ENCODE measurements at regions of chr3 and their contacts with region 1.

Region 1: DNA sequence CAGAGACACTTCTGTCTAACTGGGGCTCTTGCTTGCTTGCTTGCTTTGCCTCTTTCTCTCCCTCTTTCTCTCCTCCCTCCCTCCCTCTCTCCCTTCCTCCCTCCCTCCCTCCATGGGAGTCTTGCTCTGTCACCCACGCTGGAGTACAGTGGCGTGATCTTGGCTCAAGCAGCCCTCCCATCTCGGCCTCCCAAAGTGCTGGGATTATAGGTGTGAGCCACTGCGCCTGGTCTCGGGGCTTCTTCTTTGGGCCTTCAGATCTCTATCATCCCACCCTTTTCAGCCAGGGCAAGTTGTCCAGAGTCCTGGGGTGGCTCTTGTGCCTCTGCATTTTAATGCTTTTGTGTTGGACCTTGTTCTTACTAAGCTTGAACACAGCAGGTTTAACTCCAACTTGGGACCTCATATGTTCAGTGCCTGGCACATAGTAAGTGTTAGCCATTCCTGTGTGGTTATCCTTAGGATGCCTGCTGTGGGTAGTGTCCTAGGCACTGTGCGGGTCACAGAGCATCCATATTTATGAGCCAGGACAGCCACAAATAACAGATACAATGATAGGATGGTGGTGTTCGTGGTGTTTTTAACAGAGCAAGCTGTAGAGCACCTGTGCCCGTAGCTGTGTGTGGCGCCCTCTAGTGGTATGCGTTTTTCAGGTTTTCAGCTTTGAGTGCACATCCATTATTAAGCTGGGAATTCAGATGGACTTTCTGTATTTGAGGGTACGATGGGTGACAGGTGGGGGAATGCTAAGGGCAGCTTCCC is 75.1 kb downstream of the CCK start:
- DNase-seq: peak; percentile 80
- ATAC-seq: peak; percentile 90
- H3K4me3 Mint-ChIP-seq: no peak overlapping the region
- H3K27ac Mint-ChIP-seq: no peak overlapping the region
- H3K4me1 Mint-ChIP-seq: peaks cover 11% of the 10 kb centered on the region
- H3K27me3 Mint-ChIP-seq: no peaks in the 10 kb centered on the region

Region 2: GRCh38 chr3:41893977-41894376 is 296.9 kb before region 1 on chr3:
- CTCF ChIA-PET with region 1: interaction called, 9 read pairs
- POLR2A ChIA-PET with region 1: no interaction called
- intact Hi-C with region 1: loop called (anchors 1 to 2 kb)
- DNase-seq: no peak
- ATAC-seq: no peak
- H3K4me3 Mint-ChIP-seq: no peak overlapping the region
- H3K27ac Mint-ChIP-seq: no peak overlapping the region
- H3K4me1 Mint-ChIP-seq: no peaks in the 10 kb centered on the region
- H3K27me3 Mint-ChIP-seq: no peaks in the 10 kb centered on the region

Region 3: DNA sequence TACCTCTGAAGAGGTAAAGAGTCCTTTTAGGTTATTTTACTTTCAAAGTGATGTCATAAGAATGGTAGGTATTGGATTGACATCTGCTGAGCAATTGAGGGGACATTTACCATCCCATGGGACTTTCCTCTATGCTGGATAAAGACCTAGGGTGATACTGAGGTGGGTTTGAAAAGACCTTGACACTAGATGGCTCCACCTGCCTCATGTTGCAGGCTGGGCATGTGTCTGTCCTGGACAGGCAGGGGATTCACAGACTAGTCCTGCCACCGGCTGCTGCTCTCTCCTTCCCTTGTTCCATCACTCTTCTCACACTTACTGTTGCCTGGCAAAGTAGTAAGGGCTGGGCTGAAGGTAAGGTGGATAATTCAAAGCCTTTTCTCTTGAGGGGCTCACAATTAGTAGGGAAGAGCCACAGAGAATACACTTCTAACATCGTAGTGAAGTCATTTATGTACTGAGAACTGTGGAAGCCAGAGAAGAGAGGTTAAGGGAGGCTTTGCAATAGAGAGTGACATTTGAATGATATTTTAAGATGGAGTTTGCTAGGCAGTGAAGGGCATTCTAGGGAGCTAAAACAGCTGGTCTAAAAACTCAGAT is 72.0 kb before region 1 on chr3:
- CTCF ChIA-PET with region 1: interaction called, 41 read pairs
- POLR2A ChIA-PET with region 1: no interaction called
- intact Hi-C with region 1: loop called (anchors 1 kb)
- DNase-seq: peak; percentile 37
- ATAC-seq: peak; percentile 66
- H3K4me3 Mint-ChIP-seq: no peak overlapping the region
- H3K27ac Mint-ChIP-seq: no peak overlapping the region
- H3K4me1 Mint-ChIP-seq: peaks cover 20% of the 10 kb centered on the region
- H3K27me3 Mint-ChIP-seq: no peaks in the 10 kb centered on the region

Region 4: DNA sequence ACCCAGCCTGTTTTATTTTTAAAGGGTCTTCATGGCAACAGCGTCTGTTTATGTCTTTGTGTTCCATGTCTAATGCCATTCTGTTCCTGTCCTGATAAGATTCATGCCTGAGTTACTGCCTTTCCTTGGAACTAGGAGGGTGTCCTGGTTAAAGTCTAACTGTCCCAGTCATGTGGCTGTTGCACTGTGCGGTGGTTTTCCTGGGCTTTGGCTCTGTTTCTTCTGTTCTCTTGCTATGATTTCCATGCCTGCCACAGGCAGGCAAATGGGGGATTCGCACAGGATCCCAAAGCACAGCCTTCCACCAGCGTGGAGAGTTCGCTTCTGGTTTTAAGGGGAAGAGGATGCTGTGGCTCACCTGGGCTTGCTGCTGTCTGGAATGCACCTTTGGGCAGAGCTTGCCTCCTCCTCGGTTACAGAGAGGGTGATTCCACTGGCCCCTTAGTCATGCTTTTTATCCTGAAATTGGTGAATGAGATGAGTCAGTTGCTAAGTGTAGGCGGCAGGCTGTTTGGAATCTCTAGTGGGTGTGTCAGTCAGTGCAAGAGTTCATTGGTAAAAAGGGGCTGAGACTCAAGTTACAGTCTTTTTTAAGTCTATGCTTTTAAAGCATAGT is 11.7 kb before region 1 on chr3:
- CTCF ChIA-PET with region 1: interaction called, 35 read pairs
- POLR2A ChIA-PET with region 1: no interaction called
- intact Hi-C with region 1: no loop called
- DNase-seq: peak; percentile 30
- ATAC-seq: peak; percentile 77
- H3K4me3 Mint-ChIP-seq: no peak overlapping the region
- H3K27ac Mint-ChIP-seq: peak overlapping the region; percentile 12
- H3K4me1 Mint-ChIP-seq: peaks cover 9% of the 10 kb centered on the region
- H3K27me3 Mint-ChIP-seq: no peaks in the 10 kb centered on the region

Region 5: DNA sequence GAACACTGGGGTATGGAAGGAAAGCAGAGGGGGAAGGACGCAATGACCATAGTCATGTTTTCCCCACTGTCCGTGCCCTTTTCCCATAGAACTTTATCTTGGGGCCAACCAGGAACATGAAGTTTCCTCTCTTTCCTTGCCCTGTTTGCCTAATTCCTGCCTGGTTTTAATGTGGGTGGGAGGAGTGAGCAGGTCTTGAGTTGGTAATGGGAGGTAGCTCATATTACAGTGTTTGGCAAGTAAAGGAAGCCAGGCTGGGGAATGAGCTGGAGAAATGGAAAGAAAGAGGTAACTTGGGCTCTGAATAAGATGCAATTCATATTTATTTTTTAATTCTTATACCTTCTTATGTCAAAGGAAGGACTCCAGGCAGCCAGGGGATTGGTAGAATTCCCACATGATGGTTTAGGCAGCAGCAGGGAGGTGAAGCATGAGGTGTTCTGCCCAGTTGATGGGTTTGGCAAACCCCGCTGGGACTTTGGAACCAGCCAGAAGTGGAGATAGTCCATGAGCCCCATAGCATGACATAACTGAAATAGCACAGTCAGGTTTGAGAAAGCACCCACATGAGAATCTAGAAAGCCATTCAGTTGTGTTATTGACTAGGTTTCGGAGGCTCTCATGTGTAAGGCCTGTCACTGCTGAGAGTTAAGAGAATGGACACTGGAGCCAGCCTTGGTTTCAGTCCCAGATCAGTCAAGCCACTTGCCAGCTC is 15.1 kb after region 1 on chr3:
- CTCF ChIA-PET with region 1: interaction called, 21 read pairs
- POLR2A ChIA-PET with region 1: no interaction called
- intact Hi-C with region 1: no loop called
- DNase-seq: no peak
- ATAC-seq: no peak
- H3K4me3 Mint-ChIP-seq: no peak overlapping the region
- H3K27ac Mint-ChIP-seq: no peak overlapping the region
- H3K4me1 Mint-ChIP-seq: no peaks in the 10 kb centered on the region
- H3K27me3 Mint-ChIP-seq: no peaks in the 10 kb centered on the region

Region 6: GRCh38 chr3:42473083-42473932 is 282.4 kb after region 1 on chr3:
- CTCF ChIA-PET with region 1: no interaction called
- POLR2A ChIA-PET with region 1: no interaction called
- intact Hi-C with region 1: no loop called
- DNase-seq: no peak
- ATAC-seq: no peak
- H3K4me3 Mint-ChIP-seq: no peak overlapping the region
- H3K27ac Mint-ChIP-seq: no peak overlapping the region
- H3K4me1 Mint-ChIP-seq: no peaks in the 10 kb centered on the region
- H3K27me3 Mint-ChIP-seq: peaks cover 5% of the 10 kb centered on the region